ENCODE measurements at regions of chr4 and their contacts with region 1.

Region 1: DNA sequence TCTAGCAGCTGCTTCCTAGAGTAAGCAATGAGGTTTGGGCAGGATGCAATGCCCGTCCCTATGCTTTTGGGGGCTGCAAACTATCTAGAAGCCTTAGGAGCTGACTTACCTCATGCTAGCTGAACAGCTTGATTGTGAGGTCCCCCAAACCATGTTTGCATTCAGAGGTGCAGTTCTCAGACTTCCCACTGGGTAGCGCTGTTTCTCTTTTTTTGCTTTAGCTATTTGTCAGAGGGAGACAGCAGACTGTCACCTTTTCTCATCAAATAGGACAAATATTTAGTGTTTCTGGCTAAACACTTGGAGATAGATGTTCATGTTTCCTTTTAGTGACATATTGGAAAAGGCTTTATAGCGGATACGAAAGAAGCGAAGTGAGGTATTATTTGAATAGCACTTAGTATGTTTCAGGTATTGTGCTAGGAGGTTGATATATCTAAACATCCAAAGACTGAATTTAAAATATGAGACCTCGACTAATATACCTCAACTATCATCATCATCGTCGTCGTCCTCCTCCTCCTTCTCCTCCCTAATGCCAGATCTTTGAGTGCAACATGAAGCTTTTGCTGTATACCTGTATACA is 18.7 kb upstream of the TMEM192 start:
- DNase-seq: peak; percentile 46
- ATAC-seq: peak; percentile 95
- H3K4me3 ChIP-seq: no peak overlapping the region
- H3K27ac ChIP-seq: no peak overlapping the region
- H3K4me1 ChIP-seq: no peaks in the 10 kb centered on the region
- H3K27me3 ChIP-seq: no peaks in the 10 kb centered on the region
- CTCF ChIP-seq: peak; percentile 82 to 98 (median 88)
- POLR2A ChIP-seq: no peak
- RAD21 ChIP-seq: peak; percentile 95

Region 2: GRCh38 chr4:164828955-164829354 is 302.4 kb before region 1 on chr4:
- CTCF ChIA-PET with region 1: no interaction called
- POLR2A ChIA-PET with region 1: no interaction called
- RAD21 ChIA-PET with region 1: no interaction called
- intact Hi-C with region 1: no loop called
- DNase-seq: no peak
- ATAC-seq: no peak
- H3K4me3 ChIP-seq: no peak overlapping the region
- H3K27ac ChIP-seq: no peak overlapping the region
- H3K4me1 ChIP-seq: no peaks in the 10 kb centered on the region
- H3K27me3 ChIP-seq: no peaks in the 10 kb centered on the region
- CTCF ChIP-seq: no peak
- POLR2A ChIP-seq: no peak
- RAD21 ChIP-seq: no peak

Region 3: GRCh38 chr4:165327211-165328100 is 196.1 kb after region 1 on chr4 and contains the start of gene MSMO1:
- CTCF ChIA-PET with region 1: interaction called, 6 read pairs
- POLR2A ChIA-PET with region 1: interaction called, 9 read pairs
- RAD21 ChIA-PET with region 1: no interaction called
- intact Hi-C with region 1: loop called (anchors 5 kb)
- DNase-seq: peak; percentile 98
- ATAC-seq: peak; percentile 96
- H3K4me3 ChIP-seq: peak within 1 kb of the TSS; percentile 89 to 90
- H3K27ac ChIP-seq: peak within 1 kb of the TSS; percentile 58
- H3K4me1 ChIP-seq: peaks cover 11 to 28% of the 10 kb centered on the region in 2 experiments
- H3K27me3 ChIP-seq: no peaks in the 10 kb centered on the region
- CTCF ChIP-seq: no peak
- POLR2A ChIP-seq: peak; percentile 70
- RAD21 ChIP-seq: no peak
- total RNA-seq, gene MSMO1: 54.5 TPM

Region 4: DNA sequence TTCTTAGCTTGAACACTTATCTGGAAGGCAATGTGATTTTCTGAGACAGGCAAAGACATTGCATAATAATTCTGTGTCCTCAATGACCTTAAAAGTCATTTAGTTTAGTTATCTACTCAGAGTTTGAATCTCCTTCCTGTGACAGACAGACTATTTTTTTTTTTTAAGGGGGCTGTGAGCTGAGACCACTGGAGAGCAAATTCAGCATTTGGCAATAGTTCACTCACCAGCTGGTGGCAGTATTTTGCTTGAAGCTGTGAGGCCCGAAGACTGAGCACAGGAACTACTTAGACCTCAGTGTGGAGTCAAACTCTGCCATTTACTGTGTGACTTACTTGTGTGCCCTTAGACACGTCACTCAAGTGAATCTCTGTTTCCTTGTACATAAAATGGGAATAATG is 224.6 kb after region 1 on chr4:
- CTCF ChIA-PET with region 1: interaction called, 12 read pairs
- POLR2A ChIA-PET with region 1: no interaction called
- RAD21 ChIA-PET with region 1: no interaction called
- intact Hi-C with region 1: no loop called
- DNase-seq: peak; percentile 59
- ATAC-seq: peak; percentile 93
- H3K4me3 ChIP-seq: no peak overlapping the region
- H3K27ac ChIP-seq: no peak overlapping the region
- H3K4me1 ChIP-seq: peaks cover 0 to 3% of the 10 kb centered on the region in 2 experiments; a peak in 2 of 4 replicates
- H3K27me3 ChIP-seq: no peaks in the 10 kb centered on the region
- CTCF ChIP-seq: peak; percentile 67 to 77 (median 67)
- POLR2A ChIP-seq: no peak
- RAD21 ChIP-seq: peak; percentile 83

Region 5: DNA sequence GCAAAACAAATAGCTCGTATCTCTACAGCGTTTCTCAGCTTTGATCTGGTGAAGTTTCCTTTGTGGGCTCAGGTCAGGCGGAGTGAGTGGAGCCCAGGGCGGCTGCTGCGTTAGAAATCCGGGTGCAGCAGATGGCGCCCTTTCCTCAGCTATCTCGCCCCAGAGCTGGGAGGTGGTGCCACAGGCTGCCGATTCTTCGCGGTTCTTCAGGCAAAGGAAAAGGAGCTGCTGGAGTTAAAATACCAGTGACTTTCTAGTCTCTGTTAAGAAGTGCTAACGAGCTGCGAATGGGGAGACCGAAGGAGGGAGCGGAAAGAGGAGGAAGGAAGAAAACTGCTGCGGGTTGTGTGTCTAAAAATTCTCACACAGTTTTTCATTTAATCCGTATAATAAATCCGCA is 362.0 kb after region 1 on chr4:
- CTCF ChIA-PET with region 1: interaction called, 11 read pairs
- POLR2A ChIA-PET with region 1: no interaction called
- RAD21 ChIA-PET with region 1: no interaction called
- intact Hi-C with region 1: no loop called
- DNase-seq: peak; percentile 37
- ATAC-seq: peak; percentile 100
- H3K4me3 ChIP-seq: no peak overlapping the region
- H3K27ac ChIP-seq: no peak overlapping the region
- H3K4me1 ChIP-seq: peaks cover 0 to 3% of the 10 kb centered on the region in 2 experiments; a peak in 2 of 4 replicates
- H3K27me3 ChIP-seq: no peaks in the 10 kb centered on the region
- CTCF ChIP-seq: peak; percentile 64 to 82 (median 65); a peak in 5 of 6 replicates
- POLR2A ChIP-seq: no peak
- RAD21 ChIP-seq: peak; percentile 93

Measured in HCT116 (cell line).